ENCODE measurements at regions of chr2 and their contacts with region 1.

Region 1: GRCh38 chr2:64523666-64524603 is at the start of gene AFTPH:
- DNase-seq: peak; percentile 99
- ATAC-seq: peak; percentile 89
- H3K4me3 ChIP-seq: peak within 1 kb of the TSS; percentile 74 to 99 (median 97)
- H3K4me3 Mint-ChIP-seq: peak within 1 kb of the TSS; percentile 98
- H3K27ac ChIP-seq: peak within 1 kb of the TSS; percentile 92 to 97
- H3K27ac Mint-ChIP-seq: peak within 1 kb of the TSS; percentile 100
- H3K4me1 ChIP-seq: peaks cover 34 to 36% of the 10 kb centered on the region in 2 donors
- H3K4me1 Mint-ChIP-seq: peaks cover 45% of the 10 kb centered on the region
- H3K27me3 ChIP-seq: no peaks in the 10 kb centered on the region
- H3K27me3 Mint-ChIP-seq: no peaks in the 10 kb centered on the region
- CTCF ChIP-seq: no peak
- total RNA-seq, gene AFTPH: 91.6 and 94.1 TPM in 2 replicates

Region 2: GRCh38 chr2:63588385-63589147 is 935.4 kb before region 1 on chr2 and contains the starts of genes MDH1 and WDPCP:
- CTCF ChIA-PET with region 1: no interaction called
- POLR2A ChIA-PET with region 1: no interaction called
- intact Hi-C with region 1: loop called (anchors 2 kb)
- DNase-seq: peak; percentile 98
- ATAC-seq: peak; percentile 84
- H3K4me3 ChIP-seq: peak within 1 kb of the TSS; percentile 93 to 98 (median 94)
- H3K4me3 Mint-ChIP-seq: peak within 1 kb of the TSS; percentile 91
- H3K27ac ChIP-seq: peak within 1 kb of the TSS; percentile 93 to 94
- H3K27ac Mint-ChIP-seq: peak within 1 kb of the TSS; percentile 93
- H3K4me1 ChIP-seq: peaks cover 14 to 19% of the 10 kb centered on the region in 2 donors
- H3K4me1 Mint-ChIP-seq: peaks cover 37% of the 10 kb centered on the region
- H3K27me3 ChIP-seq: no peaks in the 10 kb centered on the region
- H3K27me3 Mint-ChIP-seq: no peaks in the 10 kb centered on the region
- CTCF ChIP-seq: no peak
- total RNA-seq, gene MDH1: 87.8 and 95.6 TPM in 2 replicates
- total RNA-seq, gene WDPCP: 22.8 and 31.4 TPM in 2 replicates

Region 3: DNA sequence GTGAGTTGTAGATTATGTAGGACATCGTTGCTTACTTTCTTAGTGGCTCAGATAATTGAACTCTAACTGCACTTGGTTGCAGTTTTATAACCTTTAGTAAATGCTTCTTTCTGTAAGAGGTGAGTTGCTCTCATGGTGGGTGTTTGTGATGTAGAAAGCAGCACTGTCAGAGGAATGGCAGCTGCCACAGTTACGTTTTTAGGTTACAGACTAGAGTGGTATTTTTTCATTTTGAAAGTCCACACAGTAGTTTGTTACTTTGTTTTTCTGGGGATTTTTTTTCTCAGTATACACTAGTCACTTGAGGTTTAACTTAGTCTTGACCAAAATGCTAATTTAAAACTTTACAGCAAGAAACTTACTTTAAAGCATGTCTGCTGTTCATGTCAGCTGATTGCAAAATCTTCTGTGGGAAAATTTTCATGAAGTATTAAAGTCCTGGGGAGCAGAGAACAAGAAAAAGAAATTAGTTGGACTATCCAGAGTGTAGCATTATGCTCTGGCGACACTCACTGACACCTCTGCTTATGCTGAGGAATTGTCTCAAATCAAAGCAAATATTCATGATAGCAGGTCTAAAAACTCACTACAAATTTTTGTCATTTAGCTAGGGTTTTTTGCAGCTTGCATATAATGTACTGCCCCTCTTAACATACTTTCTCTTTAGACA is 15.0 kb after region 1 on chr2:
- CTCF ChIA-PET with region 1: interaction called, 13 read pairs
- POLR2A ChIA-PET with region 1: interaction called, 3 read pairs
- intact Hi-C with region 1: loop called (anchors 2 kb)
- DNase-seq: no peak
- ATAC-seq: no peak
- H3K4me3 ChIP-seq: no peak overlapping the region
- H3K4me3 Mint-ChIP-seq: no peak overlapping the region
- H3K27ac ChIP-seq: no peak overlapping the region
- H3K27ac Mint-ChIP-seq: no peak overlapping the region
- H3K4me1 ChIP-seq: peaks cover 16 to 27% of the 10 kb centered on the region in 2 donors
- H3K4me1 Mint-ChIP-seq: peaks cover 69% of the 10 kb centered on the region
- H3K27me3 ChIP-seq: no peaks in the 10 kb centered on the region
- H3K27me3 Mint-ChIP-seq: no peaks in the 10 kb centered on the region
- CTCF ChIP-seq: no peak

Region 4: DNA sequence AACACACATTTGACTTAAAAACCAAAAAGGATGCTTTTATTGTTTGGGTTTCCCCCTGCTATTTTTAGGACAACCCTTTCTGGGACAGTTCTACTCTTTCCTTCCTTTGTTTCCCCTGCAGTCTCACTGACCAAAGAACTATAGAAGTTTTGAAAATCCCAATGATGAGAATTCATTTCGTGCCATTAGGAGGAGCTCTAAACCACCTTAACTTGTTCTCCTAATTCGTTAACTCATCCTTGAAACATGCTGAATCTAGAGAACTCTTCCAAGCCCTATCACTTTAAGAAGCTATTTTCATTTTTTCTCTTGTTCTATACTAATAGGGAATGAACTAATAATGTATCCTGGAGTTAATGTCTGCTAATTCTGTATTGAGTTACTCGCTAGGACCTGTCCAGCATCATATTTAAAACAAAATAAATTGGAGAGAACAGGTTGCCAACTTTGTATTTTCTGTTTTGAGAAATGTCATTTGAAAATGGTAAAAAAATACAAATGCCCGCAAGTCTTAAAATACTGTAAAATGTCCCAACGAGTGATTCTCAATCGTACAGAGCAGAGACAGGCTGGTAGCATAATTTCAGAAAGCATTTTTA is 63.0 kb after region 1 on chr2:
- CTCF ChIA-PET with region 1: interaction called, 15 read pairs
- POLR2A ChIA-PET with region 1: no interaction called
- intact Hi-C with region 1: no loop called
- DNase-seq: peak; percentile 72
- ATAC-seq: peak; percentile 58
- H3K4me3 ChIP-seq: no peak overlapping the region
- H3K4me3 Mint-ChIP-seq: no peak overlapping the region
- H3K27ac ChIP-seq: no peak overlapping the region
- H3K27ac Mint-ChIP-seq: peak overlapping the region; percentile 32
- H3K4me1 ChIP-seq: peaks cover 0 to 4% of the 10 kb centered on the region in 2 donors
- H3K4me1 Mint-ChIP-seq: peaks cover 14% of the 10 kb centered on the region
- H3K27me3 ChIP-seq: no peaks in the 10 kb centered on the region
- H3K27me3 Mint-ChIP-seq: no peaks in the 10 kb centered on the region
- CTCF ChIP-seq: peak; percentile 88

Region 5: DNA sequence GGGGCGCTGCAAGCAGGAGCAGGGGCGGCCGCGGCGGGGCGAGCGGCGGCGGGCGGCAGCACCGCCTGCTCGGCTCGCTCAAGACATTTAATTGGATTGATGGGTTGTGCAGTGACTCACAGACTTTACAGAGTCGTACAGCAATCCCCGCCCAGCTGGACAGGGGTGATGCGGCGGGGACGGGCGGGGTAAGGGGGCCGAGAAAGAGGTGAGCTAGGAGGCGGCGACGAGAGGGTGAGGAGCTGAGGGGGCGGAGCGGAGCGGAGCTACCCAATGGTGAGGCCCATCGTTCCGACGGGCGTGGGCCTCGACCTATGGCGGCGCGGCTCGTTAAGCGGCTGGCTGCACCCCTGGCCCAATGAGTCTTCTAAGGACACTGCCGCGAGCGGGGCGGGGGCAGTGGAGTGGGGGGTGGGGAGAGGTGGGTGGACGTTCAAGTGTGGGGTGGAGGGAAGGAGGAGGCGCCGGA is 226.9 kb after region 1 on chr2:
- CTCF ChIA-PET with region 1: interaction called, 4 read pairs
- POLR2A ChIA-PET with region 1: no interaction called
- intact Hi-C with region 1: loop called (anchors 1 kb)
- DNase-seq: peak; percentile 99
- ATAC-seq: peak; percentile 81
- H3K4me3 ChIP-seq: peak overlapping the region; percentile 75 to 99 (median 93)
- H3K4me3 Mint-ChIP-seq: peak overlapping the region; percentile 91
- H3K27ac ChIP-seq: peak overlapping the region; percentile 83 to 88
- H3K27ac Mint-ChIP-seq: peak overlapping the region; percentile 98
- H3K4me1 ChIP-seq: peaks cover 18 to 19% of the 10 kb centered on the region in 2 donors
- H3K4me1 Mint-ChIP-seq: peaks cover 28% of the 10 kb centered on the region
- H3K27me3 ChIP-seq: no peaks in the 10 kb centered on the region
- H3K27me3 Mint-ChIP-seq: no peaks in the 10 kb centered on the region
- CTCF ChIP-seq: no peak

Region 6: DNA sequence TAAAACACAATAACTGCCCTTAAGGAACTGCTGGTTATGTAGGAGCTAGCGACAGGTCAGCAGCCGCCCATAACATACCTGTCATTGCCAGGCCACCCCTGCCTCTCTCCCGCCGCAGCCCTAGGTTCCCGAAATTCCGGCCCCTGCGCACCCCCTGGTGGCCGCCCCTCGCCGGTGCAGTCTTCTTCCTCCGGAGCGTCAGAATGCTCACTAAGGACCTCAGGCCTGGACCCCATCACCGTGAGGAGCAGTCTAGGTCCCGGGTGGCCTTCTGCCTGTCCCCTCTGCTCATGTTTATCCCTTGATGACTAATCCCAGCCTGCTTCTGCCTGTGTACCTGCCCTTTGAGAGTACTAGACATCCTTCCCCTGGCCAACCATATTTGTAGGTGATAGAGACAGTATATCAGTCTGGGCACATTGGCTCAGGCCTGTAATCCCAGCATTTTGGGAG is 349.6 kb after region 1 on chr2:
- CTCF ChIA-PET with region 1: interaction called, 31 read pairs
- POLR2A ChIA-PET with region 1: interaction called, 4 read pairs
- intact Hi-C with region 1: loop called (anchors 1 kb)
- DNase-seq: peak; percentile 87
- ATAC-seq: peak; percentile 99
- H3K4me3 ChIP-seq: peak overlapping the region in 3 of 5 experiments; percentile 11 to 35 (median 29)
- H3K4me3 Mint-ChIP-seq: peak overlapping the region; percentile 67
- H3K27ac ChIP-seq: no peak overlapping the region
- H3K27ac Mint-ChIP-seq: no peak overlapping the region
- H3K4me1 ChIP-seq: peaks cover 7 to 9% of the 10 kb centered on the region in 2 donors
- H3K4me1 Mint-ChIP-seq: peaks cover 7% of the 10 kb centered on the region
- H3K27me3 ChIP-seq: no peaks in the 10 kb centered on the region
- H3K27me3 Mint-ChIP-seq: no peaks in the 10 kb centered on the region
- CTCF ChIP-seq: peak; percentile 93

Region 7: GRCh38 chr2:65031341-65032018 is 507.5 kb after region 1 on chr2:
- CTCF ChIA-PET with region 1: interaction called, 11 read pairs
- POLR2A ChIA-PET with region 1: interaction called, 3 read pairs
- intact Hi-C with region 1: loop called (anchors 2 kb)
- DNase-seq: peak; percentile 68
- ATAC-seq: peak; percentile 12
- H3K4me3 ChIP-seq: peak overlapping the region; percentile 9 to 63 (median 44)
- H3K4me3 Mint-ChIP-seq: peak overlapping the region; percentile 89
- H3K27ac ChIP-seq: peak overlapping the region; percentile 67 to 87
- H3K27ac Mint-ChIP-seq: peak overlapping the region; percentile 87
- H3K4me1 ChIP-seq: peaks cover 60 to 71% of the 10 kb centered on the region in 2 donors
- H3K4me1 Mint-ChIP-seq: peaks cover 65% of the 10 kb centered on the region
- H3K27me3 ChIP-seq: no peaks in the 10 kb centered on the region
- H3K27me3 Mint-ChIP-seq: no peaks in the 10 kb centered on the region
- CTCF ChIP-seq: no peak

Measured in B cell (primary cell).